Panc1 (cell line): ENCODE measurements at regions of chr17 and their contacts with region 1.

Region 1: GRCh38 chr17:64565563-64565962 is 58.8 kb downstream of the CEP95 start:
- DNase-seq: no peak
- ATAC-seq: no peak
- H3K4me3 ChIP-seq: no peak overlapping the region
- H3K27ac ChIP-seq: no peak overlapping the region
- H3K4me1 ChIP-seq: no peaks in the 10 kb centered on the region
- H3K27me3 ChIP-seq: no peaks in the 10 kb centered on the region
- CTCF ChIP-seq: no peak

Region 2: GRCh38 chr17:64534175-64534574 is 31.4 kb before region 1 on chr17:
- CTCF ChIA-PET with region 1: no interaction called
- POLR2A ChIA-PET with region 1: no interaction called
- in situ Hi-C with region 1: no loop called
- intact Hi-C with region 1: no loop called
- DNase-seq: no peak
- ATAC-seq: no peak
- H3K4me3 ChIP-seq: no peak overlapping the region
- H3K27ac ChIP-seq: no peak overlapping the region
- H3K4me1 ChIP-seq: no peaks in the 10 kb centered on the region
- H3K27me3 ChIP-seq: no peaks in the 10 kb centered on the region
- CTCF ChIP-seq: peak; percentile 27; the same call in 1 of the 2 replicates

Region 3: DNA sequence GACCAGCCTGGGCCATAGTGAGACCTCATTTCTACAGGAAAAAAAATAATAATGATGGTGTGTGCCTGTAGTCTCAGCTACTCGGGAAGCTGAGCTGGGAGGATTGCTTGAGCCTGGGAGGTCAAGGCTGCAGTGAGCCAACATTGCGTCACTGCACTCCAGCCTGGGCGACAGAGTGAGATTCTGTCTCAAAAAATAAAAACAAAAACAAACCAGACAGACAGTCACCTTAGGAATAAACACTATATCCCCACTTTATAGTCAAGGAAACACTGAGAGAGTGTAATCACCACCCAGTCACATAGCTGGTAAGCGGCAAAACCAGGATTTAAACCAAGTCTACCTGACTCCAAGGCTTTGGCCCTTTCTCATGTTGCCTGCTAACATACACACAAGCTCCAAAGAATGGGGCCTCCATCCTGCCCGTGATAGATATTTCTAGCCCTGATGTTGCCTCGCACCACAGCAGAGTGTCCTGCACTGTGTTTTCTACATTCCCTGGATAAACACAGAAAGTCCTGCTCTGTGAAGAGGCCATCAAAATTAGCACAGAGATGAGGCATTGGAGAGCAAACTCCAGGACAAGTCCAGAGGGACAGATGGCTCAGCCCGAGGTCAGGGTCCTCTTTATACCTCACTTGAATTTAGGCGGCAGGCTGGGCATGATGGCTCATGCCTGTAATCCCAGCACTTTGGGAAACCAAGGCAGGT is 162.6 kb after region 1 on chr17:
- CTCF ChIA-PET with region 1: interaction called, 17 read pairs
- POLR2A ChIA-PET with region 1: no interaction called
- in situ Hi-C with region 1: no loop called
- intact Hi-C with region 1: no loop called
- DNase-seq: no peak
- ATAC-seq: no peak
- H3K4me3 ChIP-seq: no peak overlapping the region
- H3K27ac ChIP-seq: no peak overlapping the region
- H3K4me1 ChIP-seq: peaks cover 8% of the 10 kb centered on the region; the same call in 1 of the 2 replicates
- H3K27me3 ChIP-seq: no peaks in the 10 kb centered on the region
- CTCF ChIP-seq: no peak